ENCODE measurements at regions of chr3 and their contacts with region 1.

Region 1: DNA sequence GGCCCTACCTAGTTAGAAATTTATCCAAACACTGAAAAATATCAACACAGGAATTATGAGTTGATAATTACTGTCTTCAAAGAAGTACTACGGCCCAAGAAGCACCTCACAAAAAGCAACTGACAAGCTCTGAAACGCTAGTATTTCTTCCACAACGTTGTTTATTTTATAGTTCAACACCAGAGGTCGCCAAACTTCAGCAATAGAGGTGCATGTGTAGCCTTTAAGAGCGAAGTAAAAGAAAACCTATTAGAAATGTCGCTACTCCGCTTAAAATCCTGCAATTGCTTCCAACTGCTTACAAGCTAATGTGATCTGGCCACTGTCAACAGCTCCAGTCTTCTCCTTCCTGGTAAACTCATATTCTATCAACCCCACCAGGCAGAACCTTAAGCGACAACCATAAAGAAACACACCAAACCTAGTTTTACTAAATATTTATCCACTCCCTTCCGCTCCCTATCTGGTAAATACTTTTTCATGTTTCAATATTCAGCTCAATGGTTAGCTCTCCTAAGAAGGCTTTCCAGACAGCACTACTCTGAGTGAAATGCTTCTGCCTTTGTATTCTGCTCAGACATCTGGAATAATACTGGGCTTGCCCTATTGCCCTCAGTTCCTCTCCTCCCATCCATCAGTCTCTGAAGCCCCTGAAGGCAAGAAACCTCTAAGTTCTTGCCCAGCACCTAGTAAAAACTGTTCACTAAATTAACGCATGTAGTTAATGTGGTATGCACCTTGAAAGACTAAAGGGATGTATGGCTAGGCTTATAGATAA is 110.2 kb downstream of the NR1I2 start:
- DNase-seq: no peak
- ATAC-seq: peak; percentile 71 to 97 (median 82)
- H3K4me3 ChIP-seq: no peak overlapping the region
- H3K27ac ChIP-seq: no peak overlapping the region
- H3K4me1 ChIP-seq: no peaks in the 10 kb centered on the region
- H3K27me3 ChIP-seq: no peaks in the 10 kb centered on the region
- CTCF ChIP-seq: peak; percentile 75

Region 2: DNA sequence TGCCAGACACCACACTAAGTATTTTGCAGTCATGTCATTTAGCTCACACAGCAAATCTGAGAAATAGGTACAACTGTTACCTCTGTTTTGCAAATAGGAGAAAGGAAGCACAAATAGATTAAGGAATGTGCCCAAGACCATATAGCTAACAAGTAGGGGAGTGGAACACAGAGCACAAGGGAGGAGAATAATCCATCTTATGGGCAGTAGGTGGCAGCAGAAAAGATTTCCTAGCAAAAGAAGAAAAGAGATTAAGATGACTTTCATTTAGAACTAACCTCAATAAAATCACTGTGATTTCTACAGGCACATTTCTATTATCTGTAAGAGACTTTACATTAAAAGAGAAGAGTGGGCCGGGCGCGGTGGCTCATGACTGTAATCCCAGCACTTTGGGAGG is 61.1 kb before region 1 on chr3:
- intact Hi-C with region 1: no loop called
- DNase-seq: no peak
- ATAC-seq: no peak
- H3K4me3 ChIP-seq: no peak overlapping the region
- H3K27ac ChIP-seq: no peak overlapping the region
- H3K4me1 ChIP-seq: peaks cover 4% of the 10 kb centered on the region
- H3K27me3 ChIP-seq: no peaks in the 10 kb centered on the region
- CTCF ChIP-seq: no peak

Region 3: GRCh38 chr3:119861681-119862080 is 30.5 kb before region 1 on chr3:
- intact Hi-C with region 1: no loop called
- DNase-seq: no peak
- ATAC-seq: no peak
- H3K4me3 ChIP-seq: no peak overlapping the region
- H3K27ac ChIP-seq: no peak overlapping the region
- H3K4me1 ChIP-seq: peaks cover 3% of the 10 kb centered on the region
- H3K27me3 ChIP-seq: no peaks in the 10 kb centered on the region
- CTCF ChIP-seq: no peak

Region 4: GRCh38 chr3:120095226-120095978 is 203.3 kb after region 1 on chr3:
- intact Hi-C with region 1: loop called in 1 of 2 experiments (anchors 10 kb)
- DNase-seq: peak; percentile 91 to 94
- ATAC-seq: peak; percentile 62 to 71 (median 64)
- H3K4me3 ChIP-seq: peak overlapping the region; percentile 96
- H3K27ac ChIP-seq: peak overlapping the region; percentile 100
- H3K4me1 ChIP-seq: peaks cover 11% of the 10 kb centered on the region
- H3K27me3 ChIP-seq: no peaks in the 10 kb centered on the region
- CTCF ChIP-seq: no peak

Region 5: GRCh38 chr3:120182724-120183524 is 290.8 kb after region 1 on chr3:
- intact Hi-C with region 1: loop called (anchors 1 to 2 kb)
- DNase-seq: no peak
- ATAC-seq: peak in 2 of 4 donors; percentile 64 to 77
- H3K4me3 ChIP-seq: no peak overlapping the region
- H3K27ac ChIP-seq: no peak overlapping the region
- H3K4me1 ChIP-seq: peaks cover under 1% of the 10 kb centered on the region
- H3K27me3 ChIP-seq: no peaks in the 10 kb centered on the region
- CTCF ChIP-seq: peak; percentile 33

Region 6: DNA sequence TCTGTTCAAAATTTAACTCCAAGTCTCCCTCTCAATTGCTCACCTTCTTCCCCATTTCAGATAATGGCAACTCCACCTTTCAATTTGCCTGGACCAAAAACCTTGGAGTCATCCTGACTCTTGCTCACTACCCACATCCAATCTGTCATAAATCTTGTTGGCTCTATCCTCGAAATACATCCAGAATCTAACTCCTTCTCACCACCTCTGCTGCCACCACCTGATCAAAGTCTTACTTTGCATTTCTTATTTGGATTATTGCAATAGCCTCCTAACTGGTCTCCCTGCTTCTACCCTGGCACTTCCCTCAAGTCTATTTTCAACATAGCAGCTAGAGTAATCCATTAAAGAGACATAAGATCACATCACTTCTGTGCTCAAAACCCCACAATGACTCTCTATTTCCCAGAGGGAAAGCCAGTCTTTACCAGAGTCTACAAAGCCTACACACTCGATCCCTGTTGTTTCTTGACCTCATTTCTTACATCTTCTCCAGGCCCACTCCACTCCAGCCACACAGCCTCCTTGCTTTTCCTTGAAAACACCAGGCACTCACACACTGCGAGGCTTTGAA is 306.3 kb after region 1 on chr3:
- intact Hi-C with region 1: loop called in 1 of 2 experiments (anchors 5 kb)
- DNase-seq: no peak
- ATAC-seq: peak; percentile 55 to 70 (median 65)
- H3K4me3 ChIP-seq: no peak overlapping the region
- H3K27ac ChIP-seq: no peak overlapping the region
- H3K4me1 ChIP-seq: peaks cover 18% of the 10 kb centered on the region
- H3K27me3 ChIP-seq: no peaks in the 10 kb centered on the region
- CTCF ChIP-seq: no peak

Region 7: GRCh38 chr3:120348981-120349818 is 457.1 kb after region 1 on chr3 and contains the start of gene LRRC58:
- intact Hi-C with region 1: loop called in 1 of 2 experiments (anchors 5 kb)
- DNase-seq: peak; percentile 95 to 96
- ATAC-seq: peak; percentile 96 to 98 (median 96)
- H3K4me3 ChIP-seq: peak within 1 kb of the TSS; percentile 89
- H3K27ac ChIP-seq: peak within 1 kb of the TSS; percentile 94
- H3K4me1 ChIP-seq: peaks cover 16% of the 10 kb centered on the region
- H3K27me3 ChIP-seq: no peaks in the 10 kb centered on the region
- CTCF ChIP-seq: peak; percentile 24
- total RNA-seq, gene LRRC58: 5.7 to 8.4 (median 6.9) TPM

Region 8: DNA sequence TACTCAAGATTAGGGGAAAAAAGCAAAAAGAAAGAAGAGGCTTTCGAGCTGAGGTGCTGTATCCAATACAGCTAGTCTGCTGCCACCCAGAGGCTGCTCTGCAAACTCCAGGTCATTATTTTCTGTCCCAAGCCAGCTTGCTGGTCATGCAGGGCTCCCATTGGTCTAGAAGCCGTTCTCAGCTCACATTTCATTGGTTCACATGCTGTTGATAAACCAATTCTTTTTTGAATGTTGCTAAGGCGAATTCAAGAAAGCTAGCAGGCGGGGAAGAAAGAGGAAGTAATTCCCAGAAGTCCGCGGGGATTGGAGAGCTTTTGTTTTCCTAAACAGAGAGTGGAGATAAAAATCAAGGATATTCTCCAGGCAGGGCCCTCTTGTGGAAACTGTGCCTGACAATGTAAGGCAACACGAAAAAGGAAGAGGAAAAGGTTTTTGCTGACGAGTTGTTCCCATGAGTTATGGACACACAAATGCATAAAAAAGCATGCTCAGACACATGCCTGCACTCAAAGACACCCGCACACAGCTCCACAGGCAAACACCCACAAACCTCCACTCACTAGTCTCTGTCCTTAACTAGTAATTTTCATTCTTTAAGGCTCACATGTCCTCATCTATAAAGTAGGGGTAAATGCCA is 525.3 kb after region 1 on chr3:
- intact Hi-C with region 1: loop called in 1 of 2 experiments (anchors 10 kb)
- DNase-seq: peak; percentile 88 to 92
- ATAC-seq: peak; percentile 91 to 99 (median 94)
- H3K4me3 ChIP-seq: peak overlapping the region; percentile 57
- H3K27ac ChIP-seq: peak overlapping the region; percentile 47
- H3K4me1 ChIP-seq: peaks cover 15% of the 10 kb centered on the region
- H3K27me3 ChIP-seq: no peaks in the 10 kb centered on the region
- CTCF ChIP-seq: peak; percentile 90

Region 9: GRCh38 chr3:120558771-120559241 is 666.7 kb after region 1 on chr3:
- intact Hi-C with region 1: loop called in 1 of 2 experiments (anchors 2 kb)
- DNase-seq: peak; percentile 90 to 92
- ATAC-seq: peak; percentile 85 to 91 (median 88)
- H3K4me3 ChIP-seq: peak overlapping the region; percentile 56
- H3K27ac ChIP-seq: peak overlapping the region; percentile 63
- H3K4me1 ChIP-seq: peaks cover 12% of the 10 kb centered on the region
- H3K27me3 ChIP-seq: no peaks in the 10 kb centered on the region
- CTCF ChIP-seq: peak; percentile 99